HepG2 (cell line): ENCODE measurements at regions of chr1 and their contacts with region 1.

Region 1: GRCh38 chr1:100485855-100486258 is 52.1 kb upstream of the GPR88 start:
- DNase-seq: peak; percentile 94
- ATAC-seq: peak; percentile 97
- H3K4me3 ChIP-seq: no peak overlapping the region
- H3K27ac ChIP-seq: peak overlapping the region; percentile 57
- H3K4me1 ChIP-seq: peaks cover 38% of the 10 kb centered on the region
- H3K27me3 ChIP-seq: no peaks in the 10 kb centered on the region
- CTCF ChIP-seq: no peak
- EP300 ChIP-seq: peak in 1 of 2 experiments; percentile 91; a peak in 2 of 4 replicates
- POLR2A ChIP-seq: no peak
- RAD21 ChIP-seq: no peak

Region 2: DNA sequence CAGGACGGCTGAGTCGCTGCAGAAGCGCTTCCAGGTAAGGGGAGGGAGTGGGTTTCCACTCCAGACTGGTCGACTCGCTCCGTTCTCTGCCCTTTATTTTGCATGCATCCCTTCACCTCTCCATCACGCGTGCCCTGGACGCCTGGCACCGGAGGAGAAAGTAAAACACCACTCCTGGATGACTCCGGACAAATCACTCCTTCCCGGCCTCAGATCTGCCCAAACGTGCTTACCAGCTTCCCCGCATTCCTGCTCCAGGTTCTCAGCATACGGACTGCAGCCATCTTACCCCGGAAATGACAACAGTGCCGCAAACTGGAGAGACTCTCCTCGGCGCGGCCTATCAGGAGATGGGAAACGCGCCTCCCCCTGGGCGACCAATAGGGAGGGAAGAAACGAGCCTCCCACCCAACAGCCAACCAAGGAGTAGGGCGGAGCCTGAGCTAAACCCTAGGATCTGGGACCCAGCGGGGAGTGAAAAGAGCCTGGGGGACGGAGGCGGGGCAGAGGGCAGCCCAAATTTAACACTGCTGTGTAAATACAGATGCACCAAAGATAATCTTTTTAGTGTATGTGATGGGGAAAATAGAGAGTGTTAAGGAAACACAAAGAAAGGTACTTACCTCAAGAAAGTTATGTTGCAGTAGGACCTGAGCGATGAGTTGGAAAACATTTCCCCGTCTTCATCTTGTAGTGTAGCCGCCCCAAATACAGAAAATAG is 236.2 kb before region 1 on chr1 and contains the start of gene DBT:
- CTCF ChIA-PET with region 1: no interaction called
- POLR2A ChIA-PET with region 1: no interaction called
- in situ Hi-C with region 1: no loop called
- intact Hi-C with region 1: no loop called
- DNase-seq: peak; percentile 92
- ATAC-seq: peak; percentile 100
- H3K4me3 ChIP-seq: peak within 1 kb of the TSS; percentile 64 to 96 (median 71)
- H3K27ac ChIP-seq: peak within 1 kb of the TSS; percentile 81
- H3K4me1 ChIP-seq: peaks cover 37% of the 10 kb centered on the region
- H3K27me3 ChIP-seq: peaks cover 0 to 3% of the 10 kb centered on the region in 2 experiments; a peak in 1 of 5 replicates
- CTCF ChIP-seq: no peak
- EP300 ChIP-seq: no peak
- POLR2A ChIP-seq: peak; percentile 93 to 96
- RAD21 ChIP-seq: no peak
- total RNA-seq, gene DBT: 10.2 and 15.8 TPM in 2 replicates

Region 3: GRCh38 chr1:100328133-100328532 is 157.7 kb before region 1 on chr1:
- CTCF ChIA-PET with region 1: no interaction called
- POLR2A ChIA-PET with region 1: no interaction called
- in situ Hi-C with region 1: no loop called
- intact Hi-C with region 1: no loop called
- DNase-seq: no peak
- ATAC-seq: no peak
- H3K4me3 ChIP-seq: no peak overlapping the region
- H3K27ac ChIP-seq: no peak overlapping the region
- H3K4me1 ChIP-seq: peaks cover 6% of the 10 kb centered on the region
- H3K27me3 ChIP-seq: no peaks in the 10 kb centered on the region
- CTCF ChIP-seq: no peak
- EP300 ChIP-seq: no peak
- POLR2A ChIP-seq: no peak
- RAD21 ChIP-seq: no peak

Region 4: GRCh38 chr1:100516857-100517256 is 31.0 kb after region 1 on chr1:
- CTCF ChIA-PET with region 1: no interaction called
- POLR2A ChIA-PET with region 1: interaction called, 6 read pairs
- in situ Hi-C with region 1: no loop called
- intact Hi-C with region 1: loop called (anchors 5 kb)
- DNase-seq: no peak
- ATAC-seq: no peak
- H3K4me3 ChIP-seq: no peak overlapping the region
- H3K27ac ChIP-seq: no peak overlapping the region
- H3K4me1 ChIP-seq: peaks cover 23% of the 10 kb centered on the region
- H3K27me3 ChIP-seq: no peaks in the 10 kb centered on the region
- CTCF ChIP-seq: no peak
- EP300 ChIP-seq: no peak
- POLR2A ChIP-seq: no peak
- RAD21 ChIP-seq: no peak

Region 5: DNA sequence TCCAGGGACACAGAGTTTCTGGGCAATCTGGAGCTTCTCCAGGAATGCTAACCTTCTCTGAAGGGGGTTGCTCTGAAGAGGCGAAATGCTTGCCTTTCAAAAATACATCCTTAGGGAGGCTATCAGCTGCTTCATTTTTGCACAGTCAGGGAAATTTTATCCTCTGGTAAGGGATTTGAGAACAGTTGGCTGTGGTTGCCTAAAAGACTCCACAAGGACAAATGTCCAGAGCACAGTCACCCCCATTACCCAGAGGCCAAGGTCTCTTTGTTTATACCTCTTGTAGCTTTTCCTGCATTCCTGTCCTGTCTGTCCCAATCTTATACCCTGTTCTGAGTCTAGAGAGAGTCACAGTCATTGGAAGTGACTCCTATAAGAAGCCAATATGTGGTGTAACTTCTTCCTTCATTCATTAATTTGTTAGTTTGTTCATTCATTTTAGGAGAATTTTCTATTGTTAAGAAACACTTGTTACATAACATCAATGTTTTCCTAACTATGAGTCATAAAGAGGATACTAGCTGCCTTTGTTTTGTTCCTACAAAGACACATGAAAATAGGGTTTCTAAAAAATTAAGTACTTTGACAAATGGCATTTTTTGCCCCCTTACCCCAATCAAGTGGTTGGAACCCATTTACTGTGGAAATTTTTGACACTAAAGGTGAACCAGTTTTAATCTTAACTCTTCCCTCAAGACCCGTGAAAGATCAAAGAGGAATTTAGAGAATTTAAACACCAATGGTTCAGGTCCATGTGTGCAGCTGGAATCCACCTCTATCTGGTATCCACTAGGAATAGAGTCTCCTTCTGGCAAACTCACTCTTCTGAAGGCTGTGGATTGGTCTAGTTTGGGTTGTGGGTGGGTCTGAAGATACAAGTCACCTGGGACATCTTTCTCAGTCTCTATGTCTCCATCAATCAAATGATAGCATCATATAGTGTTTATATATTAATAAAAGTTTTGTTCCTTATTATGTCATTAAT is 99.2 kb after region 1 on chr1:
- CTCF ChIA-PET with region 1: no interaction called
- POLR2A ChIA-PET with region 1: no interaction called
- in situ Hi-C with region 1: no loop called
- intact Hi-C with region 1: loop called (anchors 5 kb)
- DNase-seq: peak; percentile 82
- ATAC-seq: peak; percentile 94
- H3K4me3 ChIP-seq: 0 out of 6 replicates have a peak overlapping the region, but pooled peaks of 1 of the 3 experiments have one; percentile 7
- H3K27ac ChIP-seq: peak overlapping the region; percentile 70
- H3K4me1 ChIP-seq: peaks cover 51% of the 10 kb centered on the region
- H3K27me3 ChIP-seq: no peaks in the 10 kb centered on the region
- CTCF ChIP-seq: no peak
- EP300 ChIP-seq: peak; percentile 38 to 41; a peak in 1 of 4 replicates
- POLR2A ChIP-seq: no peak
- RAD21 ChIP-seq: no peak

Region 6: DNA sequence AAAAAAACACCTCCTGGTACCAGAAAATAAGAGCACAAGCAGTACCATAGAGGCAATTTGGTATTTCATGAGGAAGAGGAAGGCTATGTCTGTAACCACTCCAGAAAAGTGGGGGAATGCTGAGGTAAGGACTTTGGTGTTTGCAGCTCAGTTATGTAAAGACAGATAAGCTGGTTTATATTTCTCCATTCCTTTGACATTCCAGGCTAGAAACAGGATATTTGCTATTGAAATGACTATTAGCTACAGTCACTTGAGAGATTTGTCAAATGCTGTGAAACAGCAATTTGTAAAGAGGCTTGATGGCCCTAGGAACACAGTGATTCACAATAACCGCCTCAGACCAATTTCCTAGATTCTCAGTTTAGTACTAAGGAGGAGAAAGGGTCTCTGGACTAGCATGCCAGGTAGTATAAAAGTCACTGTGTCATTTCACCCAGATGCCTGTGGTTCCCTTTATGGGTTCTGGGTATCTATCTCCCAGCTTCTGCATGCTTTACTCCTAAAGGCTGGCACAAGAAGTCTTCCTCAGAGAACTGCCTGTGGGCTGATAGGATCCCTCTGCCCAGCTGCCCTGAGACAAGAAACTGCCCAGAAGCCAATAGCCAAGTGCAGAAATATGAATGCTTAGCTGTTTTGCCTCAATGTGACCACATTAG is 314.2 kb after region 1 on chr1:
- CTCF ChIA-PET with region 1: no interaction called
- POLR2A ChIA-PET with region 1: no interaction called
- in situ Hi-C with region 1: no loop called
- intact Hi-C with region 1: loop called (anchors 5 kb)
- DNase-seq: peak; percentile 27
- ATAC-seq: peak; percentile 76
- H3K4me3 ChIP-seq: no peak overlapping the region
- H3K27ac ChIP-seq: no peak overlapping the region
- H3K4me1 ChIP-seq: peaks cover 26% of the 10 kb centered on the region
- H3K27me3 ChIP-seq: no peaks in the 10 kb centered on the region
- CTCF ChIP-seq: no peak
- EP300 ChIP-seq: no peak
- POLR2A ChIP-seq: no peak
- RAD21 ChIP-seq: no peak